Tibial artery (tissue), 4 donors: ENCODE measurements at regions of chr2 and their contacts with region 1.

Region 1: DNA sequence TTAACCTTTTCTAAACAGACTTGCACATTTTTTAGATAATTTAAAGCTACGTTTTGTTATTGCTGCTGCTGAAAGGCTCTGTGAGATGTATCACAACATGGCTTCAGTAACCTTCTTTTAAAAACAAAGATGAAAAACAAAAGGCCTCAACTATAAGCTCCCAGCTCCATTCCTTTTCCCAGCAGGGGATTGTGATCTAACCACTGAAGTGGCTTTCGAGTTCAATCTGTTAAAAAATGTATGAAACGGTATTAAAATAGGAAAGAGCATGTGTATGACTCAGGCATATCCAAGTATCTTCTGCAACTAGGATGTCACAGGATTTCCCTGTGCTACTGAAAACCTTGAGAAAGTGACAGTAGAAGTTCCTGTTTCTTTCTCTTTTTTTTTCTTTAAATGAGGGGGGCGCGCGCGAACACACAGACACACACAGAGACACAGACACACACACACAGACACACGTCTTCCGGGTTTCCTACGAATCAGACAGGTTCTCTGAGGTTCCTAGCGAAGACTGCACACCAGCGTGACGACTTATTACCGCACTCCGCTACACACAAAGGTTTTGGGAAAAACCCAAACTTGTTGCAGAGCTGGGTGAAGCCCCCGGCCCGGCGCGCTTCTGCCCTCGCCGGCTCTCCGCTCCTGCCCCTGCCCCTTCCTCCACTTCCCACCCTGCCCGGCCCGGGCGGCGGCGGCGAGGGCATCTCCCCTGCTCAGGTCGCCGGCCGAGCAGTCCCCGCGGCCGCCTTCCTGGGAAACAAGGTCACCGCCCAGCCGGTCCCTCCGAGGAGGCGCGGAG is 86.8 kb downstream of the RBMS1 start:
- DNase-seq: peak; percentile 75 to 76
- H3K4me3 ChIP-seq: peak overlapping the region; percentile 97 to 99
- H3K27ac ChIP-seq: peak overlapping the region; percentile 89 to 96
- H3K4me1 ChIP-seq: peaks cover 0 to 64% (median 25%) of the 10 kb centered on the region in 4 donors
- H3K27me3 ChIP-seq: no peaks in the 10 kb centered on the region
- CTCF ChIP-seq: no peak

Region 2: DNA sequence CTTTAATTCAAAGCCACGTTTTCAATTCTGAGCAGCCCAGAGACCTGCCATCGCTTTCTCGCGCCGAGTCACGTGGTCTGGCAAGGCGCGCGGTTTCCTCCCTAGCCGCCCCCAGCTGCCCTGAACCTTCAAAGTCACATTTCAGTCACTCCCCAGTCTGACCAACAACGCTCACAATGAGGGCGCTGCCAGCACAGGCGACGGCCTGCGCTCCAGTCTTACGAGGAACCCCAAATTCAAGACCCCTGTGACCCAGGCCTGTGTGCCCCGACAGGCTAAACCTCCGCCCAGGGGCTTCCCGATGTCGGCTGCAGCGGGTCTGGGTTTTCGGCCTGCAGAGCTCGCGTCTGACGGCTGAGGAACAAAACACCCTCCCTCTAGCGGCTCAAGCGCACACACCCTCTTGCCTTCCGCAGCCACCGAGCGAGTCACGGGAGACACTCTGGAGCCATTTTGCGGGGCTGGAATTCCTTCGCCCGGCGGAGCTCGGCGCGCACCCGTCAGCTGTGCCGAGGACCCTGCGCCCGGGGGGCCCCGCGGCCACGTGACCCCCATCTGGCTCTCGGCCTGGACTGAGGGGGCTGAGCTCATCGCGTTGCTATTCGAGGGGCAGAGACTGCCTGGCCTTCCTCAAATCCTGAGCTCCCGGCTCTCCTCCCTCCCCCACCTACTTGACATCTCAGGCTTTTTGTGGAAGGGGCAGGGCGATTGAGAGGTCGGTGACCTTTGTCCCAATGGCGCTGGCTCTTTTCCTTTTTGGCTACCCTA is 136.8 kb before region 1 on chr2:
- intact Hi-C with region 1: loop called (anchors 10 kb)
- DNase-seq: peak; percentile 85 to 94
- H3K4me3 ChIP-seq: peak overlapping the region; percentile 52 to 61
- H3K27ac ChIP-seq: peak overlapping the region; percentile 89 to 95
- H3K4me1 ChIP-seq: peaks cover 0 to 42% (median 26%) of the 10 kb centered on the region in 4 donors
- H3K27me3 ChIP-seq: no peaks in the 10 kb centered on the region
- CTCF ChIP-seq: peak; percentile 67 to 84

Region 3: GRCh38 chr2:160332318-160332717 is 74.5 kb before region 1 on chr2:
- intact Hi-C with region 1: loop called (anchors 10 kb)
- DNase-seq: peak in 1 of 2 donors; percentile 30
- H3K4me3 ChIP-seq: no peak overlapping the region
- H3K27ac ChIP-seq: no peak overlapping the region
- H3K4me1 ChIP-seq: peaks cover 0 to 85% (median 25%) of the 10 kb centered on the region in 4 donors
- H3K27me3 ChIP-seq: no peaks in the 10 kb centered on the region
- CTCF ChIP-seq: no peak